ENCODE measurements at regions of chr4 and their contacts with region 1.

Region 1: DNA sequence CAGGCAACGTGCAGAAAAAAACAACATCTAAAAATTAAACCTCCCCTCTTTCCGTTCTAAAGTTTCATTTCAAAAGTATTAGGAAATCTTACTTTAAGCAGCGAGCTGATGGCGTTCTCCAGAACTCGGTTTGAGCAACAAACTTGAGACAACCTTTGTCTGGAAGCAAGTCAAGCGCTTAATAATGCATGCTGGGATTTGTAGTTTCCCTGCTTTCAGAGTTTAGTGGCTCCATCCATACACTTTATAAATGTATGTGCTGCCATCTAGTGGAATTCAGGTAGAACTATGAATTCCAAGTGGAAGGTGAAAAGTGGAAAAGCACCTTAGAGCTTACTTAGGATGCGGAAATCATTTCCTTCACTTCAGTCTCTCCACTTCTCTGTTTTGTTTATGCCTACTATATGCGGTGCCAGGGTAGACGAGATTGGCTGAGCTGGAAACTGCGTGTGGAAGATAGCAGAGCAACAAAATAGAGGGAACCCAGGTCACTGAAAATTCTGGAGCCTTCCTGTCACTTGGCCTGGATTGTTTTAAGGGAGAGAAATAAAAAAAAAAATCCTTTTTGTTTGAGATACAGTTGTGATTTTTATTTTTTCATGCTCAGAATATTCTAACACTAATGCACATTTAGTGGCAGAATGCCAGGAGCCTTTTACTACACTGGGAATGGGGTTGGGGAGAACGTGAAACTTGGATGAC is at the start of gene BDH2:
- DNase-seq: peak in 8 of 9 experiments; percentile 3 to 91 (median 48)
- ATAC-seq: peak; percentile 99
- H3K4me3 ChIP-seq: peak within 1 kb of the TSS; percentile 51 to 60
- H3K4me3 Mint-ChIP-seq: peak within 1 kb of the TSS; percentile 85
- H3K27ac ChIP-seq: peak within 1 kb of the TSS; percentile 4 to 37
- H3K27ac Mint-ChIP-seq: peak within 1 kb of the TSS; percentile 92
- H3K4me1 ChIP-seq: peaks cover 15% of the 10 kb centered on the region
- H3K4me1 Mint-ChIP-seq: peaks cover 41% of the 10 kb centered on the region
- H3K27me3 ChIP-seq: no peaks in the 10 kb centered on the region
- H3K27me3 Mint-ChIP-seq: no peaks in the 10 kb centered on the region
- CTCF ChIP-seq: peak; percentile 78
- total RNA-seq, gene BDH2: 16.4 to 19.9 TPM

Region 2: GRCh38 chr4:101169044-101170014 is 1930.5 kb before region 1 on chr4:
- CTCF ChIA-PET with region 1: no interaction called
- POLR2A ChIA-PET with region 1: no interaction called
- intact Hi-C with region 1: loop called in 1 of 2 experiments (anchors 10 kb)
- DNase-seq: peak; percentile 6 to 81 (median 56)
- ATAC-seq: peak; percentile 92
- H3K4me3 ChIP-seq: no peak overlapping the region
- H3K4me3 Mint-ChIP-seq: no peak overlapping the region
- H3K27ac ChIP-seq: no peak overlapping the region
- H3K27ac Mint-ChIP-seq: no peak overlapping the region
- H3K4me1 ChIP-seq: no peaks in the 10 kb centered on the region
- H3K4me1 Mint-ChIP-seq: peaks cover 2% of the 10 kb centered on the region
- H3K27me3 ChIP-seq: no peaks in the 10 kb centered on the region
- H3K27me3 Mint-ChIP-seq: no peaks in the 10 kb centered on the region
- CTCF ChIP-seq: peak; percentile 66

Region 3: DNA sequence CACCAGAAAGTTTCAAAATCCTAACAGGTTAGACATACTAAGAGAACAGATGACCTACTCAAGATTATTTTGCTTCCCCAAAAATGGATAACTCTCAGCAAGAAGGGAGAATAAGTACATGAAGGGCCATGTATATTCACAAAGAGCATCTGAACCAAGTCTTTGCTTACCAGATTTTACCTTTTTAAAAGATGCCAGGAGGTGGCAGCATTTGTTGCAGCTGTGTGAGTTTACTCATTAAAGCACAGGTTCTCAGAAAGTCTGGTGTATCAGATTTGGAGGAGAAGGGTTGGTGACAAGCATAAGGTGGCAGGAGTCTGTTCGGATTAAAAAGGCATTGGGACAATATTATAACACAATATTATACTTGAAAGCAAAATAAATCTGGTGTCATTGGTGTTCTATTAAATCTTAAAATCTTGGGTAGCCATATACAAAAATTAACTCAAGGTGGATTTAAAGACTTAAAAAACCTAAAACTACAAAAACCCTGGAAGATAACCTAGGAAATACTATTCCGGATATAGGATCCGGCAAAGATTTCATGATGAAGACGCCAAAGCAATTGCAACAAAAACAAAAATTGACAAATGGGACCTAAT is 650.0 kb before region 1 on chr4:
- CTCF ChIA-PET with region 1: no interaction called
- POLR2A ChIA-PET with region 1: no interaction called
- intact Hi-C with region 1: loop called in 1 of 2 experiments (anchors 5 kb)
- DNase-seq: peak; percentile 21 to 82 (median 48)
- ATAC-seq: peak; percentile 89
- H3K4me3 ChIP-seq: no peak overlapping the region
- H3K4me3 Mint-ChIP-seq: no peak overlapping the region
- H3K27ac ChIP-seq: no peak overlapping the region
- H3K27ac Mint-ChIP-seq: no peak overlapping the region
- H3K4me1 ChIP-seq: no peaks in the 10 kb centered on the region
- H3K4me1 Mint-ChIP-seq: peaks cover 10% of the 10 kb centered on the region
- H3K27me3 ChIP-seq: no peaks in the 10 kb centered on the region
- H3K27me3 Mint-ChIP-seq: no peaks in the 10 kb centered on the region
- CTCF ChIP-seq: peak; percentile 83

Region 4: GRCh38 chr4:102780476-102781144 is 319.2 kb before region 1 on chr4:
- CTCF ChIA-PET with region 1: no interaction called
- POLR2A ChIA-PET with region 1: no interaction called
- intact Hi-C with region 1: no loop called
- DNase-seq: no peak
- ATAC-seq: no peak
- H3K4me3 ChIP-seq: no peak overlapping the region
- H3K4me3 Mint-ChIP-seq: no peak overlapping the region
- H3K27ac ChIP-seq: no peak overlapping the region
- H3K27ac Mint-ChIP-seq: no peak overlapping the region
- H3K4me1 ChIP-seq: no peaks in the 10 kb centered on the region
- H3K4me1 Mint-ChIP-seq: no peaks in the 10 kb centered on the region
- H3K27me3 ChIP-seq: no peaks in the 10 kb centered on the region
- H3K27me3 Mint-ChIP-seq: no peaks in the 10 kb centered on the region
- CTCF ChIP-seq: no peak

Region 5: DNA sequence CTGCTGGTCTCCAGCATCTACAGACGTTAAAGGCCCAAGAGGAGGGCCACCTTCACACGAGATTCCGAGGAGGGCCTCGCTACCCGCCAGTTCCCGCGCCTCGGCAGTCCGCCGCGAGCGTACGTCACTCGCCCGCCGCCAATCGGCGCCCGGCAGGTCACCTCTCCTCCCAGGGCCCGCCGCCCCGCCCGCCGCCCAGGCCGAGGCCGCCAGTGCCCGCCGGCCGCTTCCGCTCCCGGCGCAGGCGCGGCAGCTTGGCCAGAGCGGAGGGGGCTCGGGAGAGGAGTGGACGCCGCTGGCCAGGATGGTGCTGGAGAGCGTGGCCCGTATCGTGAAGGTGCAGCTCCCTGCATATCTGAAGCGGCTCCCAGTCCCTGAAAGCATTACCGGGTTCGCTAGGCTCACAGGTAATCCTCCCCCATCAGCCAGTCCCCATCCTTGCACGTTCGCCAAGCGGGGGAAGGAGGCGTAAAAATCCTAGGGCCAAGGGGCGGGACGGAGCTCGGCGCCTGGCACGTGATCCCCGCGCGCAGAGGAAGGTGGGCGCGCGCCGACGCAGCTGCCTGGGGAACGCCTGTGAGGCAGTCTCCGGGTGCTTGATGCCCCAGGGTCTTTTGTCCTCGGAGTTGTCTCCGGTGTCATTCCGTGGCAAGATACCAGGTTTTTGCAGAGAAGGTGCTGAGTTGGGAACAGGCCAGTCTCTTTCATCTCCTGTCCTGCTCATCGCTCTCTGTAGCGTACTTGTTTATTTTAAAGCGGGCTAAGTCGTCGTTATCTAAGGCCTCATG is 230.9 kb before region 1 on chr4 and contains the start of gene CISD2:
- CTCF ChIA-PET with region 1: no interaction called
- POLR2A ChIA-PET with region 1: interaction called, 4 read pairs
- intact Hi-C with region 1: loop called (anchors 5 to 10 kb)
- DNase-seq: peak; percentile 83 to 97 (median 91)
- ATAC-seq: peak; percentile 81
- H3K4me3 ChIP-seq: peak within 1 kb of the TSS; percentile 74 to 77
- H3K4me3 Mint-ChIP-seq: peak within 1 kb of the TSS; percentile 89
- H3K27ac ChIP-seq: peak within 1 kb of the TSS; percentile 89 to 94
- H3K27ac Mint-ChIP-seq: peak within 1 kb of the TSS; percentile 99
- H3K4me1 ChIP-seq: peaks cover 37% of the 10 kb centered on the region
- H3K4me1 Mint-ChIP-seq: peaks cover 66% of the 10 kb centered on the region
- H3K27me3 ChIP-seq: no peaks in the 10 kb centered on the region
- H3K27me3 Mint-ChIP-seq: no peaks in the 10 kb centered on the region
- CTCF ChIP-seq: no peak
- total RNA-seq, gene CISD2: 14.3 to 14.4 TPM

Region 6: GRCh38 chr4:103046416-103047290 is 53.2 kb before region 1 on chr4:
- CTCF ChIA-PET with region 1: interaction called, 31 read pairs
- POLR2A ChIA-PET with region 1: interaction called, 4 read pairs
- intact Hi-C with region 1: loop called (anchors 1 to 2 kb)
- DNase-seq: peak in 7 of 9 experiments; percentile 2 to 71 (median 40)
- ATAC-seq: peak; percentile 98
- H3K4me3 ChIP-seq: no peak overlapping the region
- H3K4me3 Mint-ChIP-seq: no peak overlapping the region
- H3K27ac ChIP-seq: no peak overlapping the region
- H3K27ac Mint-ChIP-seq: no peak overlapping the region
- H3K4me1 ChIP-seq: no peaks in the 10 kb centered on the region
- H3K4me1 Mint-ChIP-seq: no peaks in the 10 kb centered on the region
- H3K27me3 ChIP-seq: no peaks in the 10 kb centered on the region
- H3K27me3 Mint-ChIP-seq: no peaks in the 10 kb centered on the region
- CTCF ChIP-seq: peak; percentile 80

Region 7: DNA sequence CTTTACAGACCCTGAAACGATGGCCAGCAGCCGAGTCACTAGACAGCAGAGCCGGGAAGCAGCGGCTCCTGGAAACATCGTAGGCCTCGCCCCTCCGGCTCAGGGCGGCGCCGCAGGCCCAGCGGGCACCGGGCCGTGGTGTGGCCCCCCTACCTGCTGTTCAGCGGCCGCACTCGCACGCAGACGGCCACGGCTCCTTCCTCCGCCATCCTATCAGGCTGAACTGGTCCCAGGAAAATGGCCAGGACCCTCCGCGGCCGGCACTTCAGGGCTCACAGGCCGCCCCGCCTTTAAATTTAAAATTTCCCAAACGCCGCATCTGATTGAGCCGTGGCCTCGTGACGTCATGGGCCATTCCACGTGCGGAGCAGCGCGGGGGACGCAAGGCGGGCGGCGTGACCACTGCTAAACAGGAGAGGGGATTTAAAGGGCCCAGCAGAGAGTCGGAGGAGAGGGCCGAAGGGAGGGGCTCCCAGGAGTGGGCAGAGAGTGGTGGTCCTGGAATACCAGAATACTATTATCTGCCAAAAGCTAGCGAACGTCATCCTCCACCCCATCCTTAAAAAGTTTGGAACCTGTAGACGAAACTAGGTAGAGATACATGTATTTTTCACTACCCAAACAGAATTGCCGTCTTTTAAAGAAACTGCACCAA is 98.4 kb after region 1 on chr4 and contains the start of gene CENPE:
- CTCF ChIA-PET with region 1: no interaction called
- POLR2A ChIA-PET with region 1: no interaction called
- intact Hi-C with region 1: loop called (anchors 5 kb)
- DNase-seq: peak; percentile 76 to 92 (median 84)
- ATAC-seq: peak; percentile 84
- H3K4me3 ChIP-seq: peak within 1 kb of the TSS; percentile 72 to 81
- H3K4me3 Mint-ChIP-seq: peak within 1 kb of the TSS; percentile 98
- H3K27ac ChIP-seq: peak within 1 kb of the TSS; percentile 85 to 87
- H3K27ac Mint-ChIP-seq: peak within 1 kb of the TSS; percentile 99
- H3K4me1 ChIP-seq: peaks cover 11% of the 10 kb centered on the region
- H3K4me1 Mint-ChIP-seq: peaks cover 12% of the 10 kb centered on the region
- H3K27me3 ChIP-seq: no peaks in the 10 kb centered on the region
- H3K27me3 Mint-ChIP-seq: no peaks in the 10 kb centered on the region
- CTCF ChIP-seq: no peak
- total RNA-seq, gene CENPE: 0.97 to 3.1 TPM

Region 8: GRCh38 chr4:104381729-104382128 is 1281.9 kb after region 1 on chr4:
- CTCF ChIA-PET with region 1: no interaction called
- POLR2A ChIA-PET with region 1: no interaction called
- intact Hi-C with region 1: no loop called
- DNase-seq: no peak
- ATAC-seq: no peak
- H3K4me3 ChIP-seq: no peak overlapping the region
- H3K4me3 Mint-ChIP-seq: no peak overlapping the region
- H3K27ac ChIP-seq: no peak overlapping the region
- H3K27ac Mint-ChIP-seq: no peak overlapping the region
- H3K4me1 ChIP-seq: no peaks in the 10 kb centered on the region
- H3K4me1 Mint-ChIP-seq: no peaks in the 10 kb centered on the region
- H3K27me3 ChIP-seq: no peaks in the 10 kb centered on the region
- H3K27me3 Mint-ChIP-seq: no peaks in the 10 kb centered on the region
- CTCF ChIP-seq: no peak

Measured in CD8-positive, alpha-beta T cell (primary cell).